Activated CD4-positive, alpha-beta memory T cell treated with anti-CD3 and anti-CD28 coated beads for 36 hours (primary cell): ENCODE measurements at regions of chr19 and their contacts with region 1.

Region 1: GRCh38 chr19:13774217-13775191 is at the start of gene C19orf53:
- DNase-seq: peak; percentile 93
- H3K4me3 Mint-ChIP-seq: peak within 1 kb of the TSS; percentile 96
- H3K27ac Mint-ChIP-seq: peak within 1 kb of the TSS; percentile 96
- H3K4me1 Mint-ChIP-seq: peaks cover 21% of the 10 kb centered on the region
- H3K27me3 Mint-ChIP-seq: no peaks in the 10 kb centered on the region
- total RNA-seq, gene C19orf53: 124 to 142 TPM

Region 2: DNA sequence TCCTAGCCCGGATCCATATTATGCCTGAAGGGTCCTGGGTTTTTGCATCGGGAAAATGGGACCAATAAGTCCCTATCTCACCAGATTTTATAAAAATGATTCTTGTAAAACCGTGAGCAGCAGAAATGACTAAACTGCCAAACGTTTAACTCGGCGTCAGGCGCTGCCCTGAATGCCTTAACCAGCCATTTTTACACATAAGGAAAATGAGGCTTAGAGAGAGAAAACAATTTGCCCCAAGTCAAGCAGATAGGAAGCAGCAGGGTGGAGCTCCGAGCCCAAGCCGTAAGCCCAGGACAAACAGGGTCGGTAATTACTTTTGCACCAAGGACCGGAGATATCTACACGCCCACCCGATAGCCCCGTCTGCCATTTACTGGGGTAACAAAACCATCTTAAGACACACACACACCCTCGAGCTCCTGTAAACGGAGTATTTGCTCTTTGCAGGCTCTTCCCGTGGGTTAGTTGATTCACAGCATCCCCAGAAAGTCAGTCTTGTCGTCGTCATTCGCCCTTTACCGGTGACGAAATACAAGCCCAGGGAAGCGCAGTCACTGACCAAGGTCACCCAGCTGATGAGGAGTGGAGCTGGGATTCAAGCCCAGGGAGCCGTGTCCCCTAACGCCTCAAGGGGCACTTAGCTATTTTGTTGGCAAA is 26.2 kb before region 1 on chr19:
- CTCF ChIA-PET with region 1: interaction called, 11 read pairs
- POLR2A ChIA-PET with region 1: interaction called, 14 read pairs
- intact Hi-C with region 1: no loop called
- DNase-seq: peak; percentile 49
- H3K4me3 Mint-ChIP-seq: peak overlapping the region; percentile 92
- H3K27ac Mint-ChIP-seq: peak overlapping the region; percentile 82
- H3K4me1 Mint-ChIP-seq: peaks cover 28% of the 10 kb centered on the region
- H3K27me3 Mint-ChIP-seq: no peaks in the 10 kb centered on the region

Region 3: DNA sequence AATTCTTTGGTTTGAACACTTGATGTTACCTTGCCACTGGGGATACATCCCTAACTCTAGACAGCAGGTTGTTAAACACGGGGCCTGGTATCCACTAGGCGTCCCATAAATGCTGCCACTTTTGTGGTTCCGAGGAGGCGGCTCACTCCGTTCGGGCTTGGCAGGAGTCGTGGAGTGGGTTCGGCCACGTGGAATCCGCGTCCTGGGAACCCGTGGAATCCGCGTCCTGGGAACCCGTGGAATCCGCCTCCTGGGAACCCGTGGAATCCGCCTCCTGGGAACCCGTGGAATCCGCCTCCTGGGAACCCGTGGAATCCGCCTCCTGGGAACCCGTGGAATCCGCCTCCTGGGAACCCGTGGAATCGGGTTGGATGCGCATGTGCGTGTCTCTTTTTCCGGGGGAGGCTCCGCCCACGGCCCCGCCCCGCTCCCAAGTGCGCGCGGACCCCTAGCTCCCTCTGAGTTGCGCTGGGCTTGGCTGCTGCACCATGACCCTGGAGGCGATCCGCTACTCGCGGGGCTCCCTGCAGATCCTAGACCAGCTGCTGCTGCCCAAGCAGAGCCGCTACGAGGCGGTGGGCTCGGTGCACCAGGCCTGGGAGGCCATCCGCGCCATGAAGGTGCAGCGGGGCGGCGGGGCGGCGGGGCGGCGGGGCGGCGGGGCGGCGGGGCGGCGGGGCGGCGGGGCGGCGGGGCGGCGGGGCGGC is 10.2 kb before region 1 on chr19 and contains the start of gene MRI1:
- CTCF ChIA-PET with region 1: no interaction called
- POLR2A ChIA-PET with region 1: interaction called, 14 read pairs
- intact Hi-C with region 1: no loop called
- DNase-seq: peak; percentile 53
- H3K4me3 Mint-ChIP-seq: peak within 1 kb of the TSS; percentile 77
- H3K27ac Mint-ChIP-seq: peak within 1 kb of the TSS; percentile 6
- H3K4me1 Mint-ChIP-seq: peaks cover 11% of the 10 kb centered on the region
- H3K27me3 Mint-ChIP-seq: no peaks in the 10 kb centered on the region
- total RNA-seq, gene MRI1: 17.7 to 19.3 TPM

Region 4: GRCh38 chr19:13784731-13785452 is 10.4 kb after region 1 on chr19:
- CTCF ChIA-PET with region 1: interaction called, 24 read pairs
- POLR2A ChIA-PET with region 1: interaction called, 7 read pairs
- intact Hi-C with region 1: no loop called
- DNase-seq: peak; percentile 86
- H3K4me3 Mint-ChIP-seq: peak overlapping the region; percentile 53
- H3K27ac Mint-ChIP-seq: peak overlapping the region; percentile 19
- H3K4me1 Mint-ChIP-seq: peaks cover 41% of the 10 kb centered on the region
- H3K27me3 Mint-ChIP-seq: no peaks in the 10 kb centered on the region

Region 5: DNA sequence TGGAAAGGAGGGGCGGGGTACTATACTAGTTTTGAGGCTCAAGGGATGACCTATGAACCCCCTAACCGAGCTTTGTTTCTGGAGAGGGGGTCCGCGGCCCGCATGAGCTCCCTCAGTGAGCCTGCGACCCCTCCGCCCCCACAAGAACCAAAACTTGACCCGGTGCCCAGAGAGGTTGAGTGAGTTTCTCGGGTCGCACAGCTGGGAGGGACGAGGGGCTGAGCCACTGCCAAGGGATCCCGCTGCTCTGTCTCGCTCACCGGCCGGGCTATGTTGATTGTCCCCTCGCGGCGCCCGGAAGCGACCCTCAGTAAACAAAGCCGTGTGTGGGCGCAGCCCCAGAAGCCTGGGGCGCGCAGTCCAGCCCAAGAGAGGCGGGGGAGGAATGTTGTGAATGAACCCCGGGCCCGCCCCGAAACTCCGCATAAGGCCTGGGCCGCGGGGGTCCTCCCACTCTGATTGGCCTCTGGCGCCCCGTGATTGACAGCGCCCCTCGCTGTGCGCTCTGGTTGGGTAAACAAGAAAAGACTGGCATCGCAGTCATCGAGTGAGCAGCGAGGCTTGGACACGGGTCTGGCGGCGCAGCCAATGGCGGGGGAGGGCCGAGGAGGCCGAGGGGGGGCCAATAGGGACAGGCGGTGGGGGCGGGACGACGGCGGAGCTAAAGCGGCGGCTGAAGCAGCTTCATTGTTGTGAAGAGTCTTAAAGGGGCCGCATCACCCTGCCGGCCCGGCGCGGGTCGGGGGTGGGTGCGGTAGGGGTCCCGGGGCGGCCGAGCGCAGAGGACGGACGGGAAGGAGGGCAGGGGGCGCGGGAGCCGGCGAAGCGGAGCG is 20.5 kb after region 1 on chr19 and contains the start of gene ZSWIM4:
- CTCF ChIA-PET with region 1: no interaction called
- POLR2A ChIA-PET with region 1: interaction called, 10 read pairs
- intact Hi-C with region 1: no loop called
- DNase-seq: peak; percentile 99
- H3K4me3 Mint-ChIP-seq: peak within 1 kb of the TSS; percentile 95
- H3K27ac Mint-ChIP-seq: peak within 1 kb of the TSS; percentile 79
- H3K4me1 Mint-ChIP-seq: peaks cover 24% of the 10 kb centered on the region
- H3K27me3 Mint-ChIP-seq: no peaks in the 10 kb centered on the region
- total RNA-seq, gene ZSWIM4: 9.2 to 10.2 TPM

Region 6: DNA sequence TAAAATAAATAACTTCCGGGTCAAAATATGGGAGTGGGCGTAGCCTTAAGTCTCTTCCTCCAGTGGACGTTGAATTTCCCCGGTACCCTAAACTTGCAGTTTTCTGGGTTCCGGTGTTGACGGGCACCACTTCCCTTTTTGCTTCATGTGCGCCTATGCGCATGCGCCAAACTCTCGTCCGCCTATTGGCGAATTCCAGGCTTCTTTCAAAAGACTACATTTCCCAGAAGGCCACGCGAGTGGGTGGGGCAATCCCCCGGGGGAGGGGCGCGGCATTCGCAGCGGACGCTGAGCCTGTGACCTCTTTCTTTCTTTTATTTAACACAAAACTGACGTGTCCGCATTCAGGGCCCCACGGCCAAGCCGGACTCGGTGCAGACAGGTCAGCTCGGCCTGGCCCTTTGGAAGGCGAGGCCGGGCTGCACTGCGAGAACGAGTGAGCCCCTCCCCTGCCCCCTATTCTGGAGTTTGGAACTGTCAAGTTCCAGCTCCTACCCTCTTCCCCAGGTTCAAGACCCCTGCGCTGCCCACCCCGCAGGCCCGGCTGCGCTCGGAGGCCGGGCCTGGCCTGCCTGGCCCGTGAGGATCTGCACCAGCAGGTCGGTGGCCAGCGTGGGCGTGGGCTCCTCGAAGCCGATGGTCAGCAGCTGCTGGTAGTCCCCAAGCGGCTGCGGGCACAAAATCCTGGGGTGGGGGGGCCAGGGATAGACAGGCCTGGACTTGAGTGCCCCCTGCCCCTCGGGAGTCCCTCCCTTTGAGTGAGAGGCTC is 307.0 kb after region 1 on chr19:
- CTCF ChIA-PET with region 1: no interaction called
- POLR2A ChIA-PET with region 1: no interaction called
- intact Hi-C with region 1: loop called (anchors 10 kb)
- DNase-seq: peak; percentile 99
- H3K4me3 Mint-ChIP-seq: peak overlapping the region; percentile 84
- H3K27ac Mint-ChIP-seq: peak overlapping the region; percentile 87
- H3K4me1 Mint-ChIP-seq: peaks cover 17% of the 10 kb centered on the region
- H3K27me3 Mint-ChIP-seq: peaks cover 2% of the 10 kb centered on the region